WTC11 (cell line): ENCODE measurements at regions of chr10 and their contacts with region 1.

Region 1: DNA sequence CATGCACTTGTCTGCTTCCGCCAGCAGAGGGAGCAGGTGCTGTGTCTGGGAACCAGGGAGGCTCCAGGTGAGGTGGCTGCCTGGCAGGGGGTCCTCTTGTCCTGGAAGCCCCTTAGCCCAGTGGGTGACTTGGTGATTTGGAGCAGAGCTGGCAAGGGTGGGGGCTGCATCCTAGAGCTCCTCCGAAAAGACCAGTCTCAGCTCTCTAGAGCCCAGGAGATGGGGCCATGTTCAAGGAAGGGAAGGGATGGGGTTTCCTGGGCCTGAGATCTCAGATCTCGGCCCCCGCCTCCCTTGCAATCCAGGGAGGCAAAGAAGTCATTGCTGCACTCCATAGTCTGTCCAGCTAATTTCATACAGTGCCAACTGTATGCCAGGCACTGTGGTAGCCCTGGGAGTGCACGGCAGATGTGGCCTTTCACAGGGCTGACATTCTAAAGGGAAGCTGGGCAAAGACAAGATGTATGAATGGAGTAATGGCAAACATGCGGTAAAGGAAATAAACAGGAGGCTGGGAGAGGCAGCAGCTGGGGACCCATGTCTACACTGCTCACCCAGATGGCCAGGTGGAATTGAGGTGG is 20.4 kb upstream of the SFRP5 start:
- DNase-seq: peak; percentile 94
- ATAC-seq: no peak
- H3K4me3 Mint-ChIP-seq: no peak overlapping the region
- H3K27ac Mint-ChIP-seq: no peak overlapping the region
- H3K4me1 Mint-ChIP-seq: peaks cover 8% of the 10 kb centered on the region; the same call in 1 of the 2 replicates
- H3K27me3 Mint-ChIP-seq: no peaks in the 10 kb centered on the region
- CTCF ChIP-seq: peak; percentile 91

Region 2: GRCh38 chr10:97673736-97674525 is 118.3 kb before region 1 on chr10:
- CTCF ChIA-PET with region 1: no interaction called
- POLR2A ChIA-PET with region 1: no interaction called
- DNase-seq: no peak
- ATAC-seq: no peak
- H3K4me3 Mint-ChIP-seq: no peak overlapping the region
- H3K27ac Mint-ChIP-seq: peak overlapping the region; percentile 60; the same call in 1 of the 2 replicates
- H3K4me1 Mint-ChIP-seq: no peaks in the 10 kb centered on the region
- H3K27me3 Mint-ChIP-seq: no peaks in the 10 kb centered on the region
- CTCF ChIP-seq: no peak

Region 3: DNA sequence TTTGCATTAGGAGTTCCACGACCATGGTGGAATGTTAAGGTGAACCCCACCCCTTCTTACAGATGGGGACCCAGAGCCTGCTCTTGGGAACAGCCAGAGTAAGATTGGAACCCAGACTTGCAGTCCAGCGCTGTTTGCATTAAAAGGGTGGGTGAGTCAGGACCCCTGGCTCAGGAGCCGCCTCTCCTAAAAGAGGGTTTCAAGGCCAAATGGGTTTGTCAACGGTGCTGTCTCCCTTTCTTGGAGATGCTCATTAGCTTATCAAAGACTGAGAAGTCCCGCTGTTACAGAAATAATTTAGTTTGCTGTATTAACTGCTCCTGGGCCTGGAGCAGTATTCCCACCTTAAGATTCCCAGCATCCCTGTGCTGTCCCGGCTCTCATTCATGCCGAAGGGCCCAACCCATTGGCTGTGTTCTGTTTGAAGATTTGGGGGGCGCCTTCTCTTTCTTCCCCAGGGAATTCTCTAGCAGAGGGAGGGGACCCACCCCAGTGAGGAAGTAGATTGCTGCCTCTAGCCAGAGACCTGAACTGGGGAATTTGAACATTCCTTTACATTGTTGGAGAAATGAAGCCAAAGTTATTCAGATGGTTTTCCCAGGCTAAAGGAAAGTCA is 76.9 kb before region 1 on chr10:
- CTCF ChIA-PET with region 1: no interaction called
- POLR2A ChIA-PET with region 1: no interaction called
- DNase-seq: peak; percentile 35
- ATAC-seq: peak; percentile 4
- H3K4me3 Mint-ChIP-seq: peak overlapping the region; percentile 98
- H3K27ac Mint-ChIP-seq: peak overlapping the region; percentile 97
- H3K4me1 Mint-ChIP-seq: peaks cover 54% of the 10 kb centered on the region
- H3K27me3 Mint-ChIP-seq: no peaks in the 10 kb centered on the region
- CTCF ChIP-seq: no peak

Region 4: DNA sequence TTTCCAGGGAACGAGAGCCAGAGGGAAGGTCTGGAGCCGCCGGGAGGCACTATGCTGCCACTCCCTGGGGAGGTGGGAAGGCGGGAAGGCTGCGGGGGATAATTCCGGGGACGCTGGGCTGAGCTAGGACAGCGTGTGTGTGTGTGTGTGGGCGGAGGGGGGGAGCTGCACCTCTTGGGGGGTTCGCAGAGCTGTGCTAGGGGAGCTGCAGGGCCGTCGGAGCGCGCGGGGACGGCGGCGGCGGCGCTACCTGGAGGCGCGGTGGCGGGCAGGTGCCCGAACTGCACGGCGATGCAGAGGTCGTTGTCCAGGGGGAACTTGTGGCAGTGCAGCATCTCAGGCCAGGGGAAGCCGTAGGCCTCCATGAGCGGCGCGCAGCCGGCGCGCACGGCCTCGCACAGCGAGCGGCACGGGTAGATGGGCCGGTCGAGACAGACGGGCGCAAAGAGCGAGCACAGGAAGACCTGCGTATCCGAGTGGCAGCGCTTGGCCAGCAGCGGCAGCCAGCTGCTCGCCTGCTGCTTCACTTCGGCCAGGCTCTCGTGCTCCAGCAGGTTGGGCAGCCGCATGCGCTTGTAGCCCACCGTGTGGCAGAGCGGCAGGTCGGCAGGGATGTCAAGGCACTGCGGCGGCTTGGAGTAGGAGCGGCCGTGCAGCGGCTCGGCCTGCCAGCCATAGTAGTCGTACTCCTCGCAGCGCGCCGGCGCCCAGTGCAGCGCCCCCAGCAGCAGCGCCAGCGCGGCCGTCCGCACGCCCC is 21.0 kb before region 1 on chr10:
- CTCF ChIA-PET with region 1: interaction called, 20 read pairs
- POLR2A ChIA-PET with region 1: no interaction called
- DNase-seq: peak; percentile 64
- ATAC-seq: peak; percentile 68
- H3K4me3 Mint-ChIP-seq: peak overlapping the region; percentile 76
- H3K27ac Mint-ChIP-seq: no peak overlapping the region
- H3K4me1 Mint-ChIP-seq: peaks cover 8% of the 10 kb centered on the region
- H3K27me3 Mint-ChIP-seq: peaks cover 63% of the 10 kb centered on the region
- CTCF ChIP-seq: no peak

Region 5: GRCh38 chr10:97805096-97805884 is 13.1 kb after region 1 on chr10:
- CTCF ChIA-PET with region 1: interaction called, 18 read pairs
- POLR2A ChIA-PET with region 1: no interaction called
- DNase-seq: peak; percentile 51
- ATAC-seq: peak; percentile 80
- H3K4me3 Mint-ChIP-seq: no peak overlapping the region
- H3K27ac Mint-ChIP-seq: no peak overlapping the region
- H3K4me1 Mint-ChIP-seq: peaks cover 18% of the 10 kb centered on the region
- H3K27me3 Mint-ChIP-seq: no peaks in the 10 kb centered on the region; the same call in 1 of the 2 replicates
- CTCF ChIP-seq: no peak

Region 6: GRCh38 chr10:97861097-97861750 is 69.0 kb after region 1 on chr10:
- CTCF ChIA-PET with region 1: interaction called, 57 read pairs
- POLR2A ChIA-PET with region 1: no interaction called
- DNase-seq: no peak
- ATAC-seq: peak; percentile 48
- H3K4me3 Mint-ChIP-seq: no peak overlapping the region
- H3K27ac Mint-ChIP-seq: no peak overlapping the region
- H3K4me1 Mint-ChIP-seq: peaks cover 26% of the 10 kb centered on the region
- H3K27me3 Mint-ChIP-seq: no peaks in the 10 kb centered on the region; the same call in 1 of the 2 replicates
- CTCF ChIP-seq: no peak

Region 7: GRCh38 chr10:97876402-97876801 is 84.2 kb after region 1 on chr10:
- CTCF ChIA-PET with region 1: interaction called, 15 read pairs
- POLR2A ChIA-PET with region 1: no interaction called
- DNase-seq: no peak
- ATAC-seq: peak; percentile 51
- H3K4me3 Mint-ChIP-seq: peak overlapping the region; percentile 33; the same call in 1 of the 2 replicates
- H3K27ac Mint-ChIP-seq: no peak overlapping the region
- H3K4me1 Mint-ChIP-seq: peaks cover 16% of the 10 kb centered on the region
- H3K27me3 Mint-ChIP-seq: no peaks in the 10 kb centered on the region
- CTCF ChIP-seq: no peak

Region 8: GRCh38 chr10:97903128-97904017 is 111.1 kb after region 1 on chr10:
- CTCF ChIA-PET with region 1: interaction called, 20 read pairs
- POLR2A ChIA-PET with region 1: no interaction called
- DNase-seq: no peak
- ATAC-seq: peak; percentile 16; the same call in 1 of the 2 replicates
- H3K4me3 Mint-ChIP-seq: no peak overlapping the region
- H3K27ac Mint-ChIP-seq: no peak overlapping the region
- H3K4me1 Mint-ChIP-seq: peaks cover 5% of the 10 kb centered on the region; the same call in 1 of the 2 replicates
- H3K27me3 Mint-ChIP-seq: no peaks in the 10 kb centered on the region
- CTCF ChIP-seq: no peak

Region 9: GRCh38 chr10:97927622-97928021 is 135.4 kb after region 1 on chr10:
- CTCF ChIA-PET with region 1: no interaction called
- POLR2A ChIA-PET with region 1: no interaction called
- DNase-seq: no peak
- ATAC-seq: no peak
- H3K4me3 Mint-ChIP-seq: no peak overlapping the region
- H3K27ac Mint-ChIP-seq: no peak overlapping the region
- H3K4me1 Mint-ChIP-seq: no peaks in the 10 kb centered on the region
- H3K27me3 Mint-ChIP-seq: no peaks in the 10 kb centered on the region
- CTCF ChIP-seq: no peak

Region 10: DNA sequence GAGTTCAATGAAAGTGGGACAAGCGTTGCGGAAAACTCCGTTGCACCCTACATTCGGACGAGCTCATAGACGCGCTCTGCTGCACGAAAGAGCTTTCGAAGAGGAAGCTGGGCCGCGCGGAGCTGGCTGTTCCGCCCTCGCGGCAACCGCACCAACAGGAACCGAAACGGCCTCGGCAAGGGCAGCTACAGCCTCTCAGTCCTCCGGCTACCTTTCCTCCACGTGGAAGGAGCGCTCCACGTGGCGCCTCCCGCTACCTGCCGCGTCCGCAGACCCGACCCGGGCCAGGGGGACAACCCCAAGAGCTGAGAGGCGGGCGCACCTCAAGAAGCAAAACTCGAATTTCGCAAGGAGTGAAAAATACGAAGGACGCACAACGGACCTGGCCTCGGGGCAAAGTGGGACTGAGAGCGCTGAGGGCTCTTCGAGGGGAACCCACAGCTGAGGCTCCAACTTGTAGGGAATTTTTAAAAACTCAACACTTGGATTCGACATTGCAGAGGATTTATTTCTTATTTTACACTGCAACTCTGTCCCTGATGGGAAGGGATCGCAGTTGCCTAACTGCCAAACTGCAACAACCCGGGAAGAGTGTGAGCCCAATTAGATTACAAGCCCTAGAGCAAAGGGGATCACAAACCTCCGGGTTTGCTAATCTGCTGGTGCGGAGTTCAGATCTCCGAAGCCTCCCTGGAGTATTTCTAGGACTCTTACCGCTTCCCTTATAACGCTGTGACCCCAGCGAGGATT is 1442.0 kb after region 1 on chr10:
- CTCF ChIA-PET with region 1: no interaction called
- POLR2A ChIA-PET with region 1: no interaction called
- DNase-seq: peak; percentile 70
- ATAC-seq: peak; percentile 18
- H3K4me3 Mint-ChIP-seq: peak overlapping the region; percentile 74
- H3K27ac Mint-ChIP-seq: no peak overlapping the region
- H3K4me1 Mint-ChIP-seq: peaks cover 46% of the 10 kb centered on the region
- H3K27me3 Mint-ChIP-seq: peaks cover 97% of the 10 kb centered on the region
- CTCF ChIP-seq: no peak